GM12878 (cell line): ENCODE measurements at regions of chr19 and their contacts with region 1.

Region 1: DNA sequence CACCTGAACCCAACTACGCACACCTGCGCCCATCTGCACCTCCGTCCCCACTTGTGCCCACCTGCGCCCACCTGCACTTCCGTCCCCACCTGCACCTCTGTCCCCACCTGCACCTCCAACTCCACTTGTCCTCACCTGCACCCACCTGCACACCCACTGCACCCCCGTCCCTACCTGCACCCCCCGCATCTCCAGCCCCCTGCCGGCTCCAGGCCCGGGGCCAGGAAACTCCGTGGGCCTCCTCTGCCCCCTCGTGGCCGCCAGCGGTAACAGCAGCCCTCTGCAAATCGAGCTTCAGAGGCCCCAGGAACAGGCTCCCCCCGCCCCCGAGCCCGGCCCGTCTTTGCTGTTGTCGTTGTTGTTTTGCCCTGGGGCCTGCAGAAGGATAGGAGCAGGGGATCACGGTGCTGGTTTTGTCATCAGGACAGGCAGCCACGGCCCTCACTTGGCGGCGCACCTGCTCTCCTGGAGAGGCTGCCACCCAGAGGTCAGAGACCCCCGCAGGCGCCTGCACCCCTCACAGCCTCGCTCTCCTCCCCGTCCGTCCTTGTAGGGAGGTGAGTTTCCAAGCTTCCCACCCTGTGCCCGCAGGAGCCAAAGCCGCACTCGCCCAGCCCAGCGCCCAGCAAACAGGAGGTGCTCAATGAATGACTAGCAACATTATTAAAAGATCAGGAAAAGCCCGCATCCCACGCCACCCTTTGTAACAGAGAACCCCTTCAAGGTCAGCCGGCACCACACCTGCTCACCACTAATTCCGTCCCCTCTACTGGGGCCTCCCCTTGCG is 65.4 kb downstream of the GNG7 start:
- DNase-seq: no peak
- ATAC-seq: peak; percentile 83
- H3K4me3 ChIP-seq: no peak overlapping the region
- H3K27ac ChIP-seq: no peak overlapping the region
- H3K4me1 ChIP-seq: peaks cover 26% of the 10 kb centered on the region
- H3K27me3 ChIP-seq: no peaks in the 10 kb centered on the region
- CTCF ChIP-seq: peak; percentile 82 to 97 (median 88)
- EP300 ChIP-seq: no peak
- POLR2A ChIP-seq: no peak; the same call in 1 of the 2 replicates
- RAD21 ChIP-seq: peak; percentile 95

Region 2: GRCh38 chr19:2618611-2619010 is 18.5 kb before region 1 on chr19:
- CTCF ChIA-PET with region 1: interaction called, 318 read pairs
- POLR2A ChIA-PET with region 1: interaction called, 7 read pairs
- RAD21 ChIA-PET with region 1: interaction called, 46 read pairs
- SMC1A ChIA-PET with region 1: interaction called, 7 read pairs
- in situ Hi-C with region 1: no loop called
- intact Hi-C with region 1: loop called (anchors 1 kb)
- DNase-seq: no peak
- ATAC-seq: no peak
- H3K4me3 ChIP-seq: no peak overlapping the region
- H3K27ac ChIP-seq: peak overlapping the region; percentile 68
- H3K4me1 ChIP-seq: peaks cover 62% of the 10 kb centered on the region
- H3K27me3 ChIP-seq: no peaks in the 10 kb centered on the region
- CTCF ChIP-seq: no peak
- EP300 ChIP-seq: 0 out of 4 replicates have a peak, but pooled peaks of 1 of the 2 experiments have one; percentile 24
- POLR2A ChIP-seq: no peak
- RAD21 ChIP-seq: no peak

Region 3: DNA sequence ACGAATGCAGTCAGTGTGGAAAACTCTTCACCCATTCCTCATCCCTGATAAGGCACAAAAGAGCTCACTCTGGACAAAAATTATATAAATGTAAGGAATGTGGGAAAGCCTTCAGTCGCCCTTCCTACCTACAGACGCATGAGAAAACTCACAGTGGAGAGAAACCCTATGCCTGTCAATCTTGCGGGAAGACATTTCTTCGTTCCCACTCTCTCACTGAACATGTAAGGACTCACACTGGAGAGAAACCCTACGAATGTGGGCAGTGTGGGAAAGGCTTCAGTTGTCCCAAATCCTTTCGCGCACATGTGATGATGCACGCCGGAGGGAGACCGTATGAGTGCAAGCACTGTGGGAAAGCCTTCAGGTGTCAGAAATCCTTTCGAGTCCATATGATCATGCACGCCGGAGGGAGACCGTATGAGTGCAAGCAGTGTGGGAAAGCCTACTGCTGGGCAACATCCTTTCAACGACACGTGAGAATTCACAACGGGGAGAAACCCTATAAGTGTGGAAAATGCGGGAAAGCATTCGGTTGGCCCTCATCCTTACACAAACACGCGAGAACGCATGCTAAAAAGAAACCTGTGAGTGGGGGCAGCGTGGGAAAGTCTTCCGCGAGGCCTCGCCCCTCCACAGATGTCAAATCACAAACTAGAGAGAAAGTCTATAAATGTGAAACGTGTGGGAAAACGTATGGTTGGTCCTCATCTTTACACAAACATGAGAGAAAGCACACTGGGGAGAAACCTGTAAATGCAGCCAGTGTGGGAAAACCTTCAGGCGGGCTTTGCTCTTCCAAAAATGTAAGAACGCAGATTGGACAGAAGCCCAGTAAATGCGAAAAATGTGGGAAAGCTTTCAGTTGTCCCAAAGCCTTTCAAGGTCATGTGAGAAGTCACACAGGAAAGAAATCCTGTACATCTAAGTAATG is 240.6 kb after region 1 on chr19:
- CTCF ChIA-PET with region 1: no interaction called
- POLR2A ChIA-PET with region 1: no interaction called
- RAD21 ChIA-PET with region 1: no interaction called
- SMC1A ChIA-PET with region 1: no interaction called
- in situ Hi-C with region 1: no loop called
- intact Hi-C with region 1: no loop called
- DNase-seq: no peak
- ATAC-seq: no peak
- H3K4me3 ChIP-seq: no peak overlapping the region
- H3K27ac ChIP-seq: no peak overlapping the region
- H3K4me1 ChIP-seq: no peaks in the 10 kb centered on the region
- H3K27me3 ChIP-seq: no peaks in the 10 kb centered on the region
- CTCF ChIP-seq: no peak
- EP300 ChIP-seq: no peak
- POLR2A ChIP-seq: no peak
- RAD21 ChIP-seq: no peak